ENCODE measurements at regions of chrX and their contacts with region 1.

Region 1: DNA sequence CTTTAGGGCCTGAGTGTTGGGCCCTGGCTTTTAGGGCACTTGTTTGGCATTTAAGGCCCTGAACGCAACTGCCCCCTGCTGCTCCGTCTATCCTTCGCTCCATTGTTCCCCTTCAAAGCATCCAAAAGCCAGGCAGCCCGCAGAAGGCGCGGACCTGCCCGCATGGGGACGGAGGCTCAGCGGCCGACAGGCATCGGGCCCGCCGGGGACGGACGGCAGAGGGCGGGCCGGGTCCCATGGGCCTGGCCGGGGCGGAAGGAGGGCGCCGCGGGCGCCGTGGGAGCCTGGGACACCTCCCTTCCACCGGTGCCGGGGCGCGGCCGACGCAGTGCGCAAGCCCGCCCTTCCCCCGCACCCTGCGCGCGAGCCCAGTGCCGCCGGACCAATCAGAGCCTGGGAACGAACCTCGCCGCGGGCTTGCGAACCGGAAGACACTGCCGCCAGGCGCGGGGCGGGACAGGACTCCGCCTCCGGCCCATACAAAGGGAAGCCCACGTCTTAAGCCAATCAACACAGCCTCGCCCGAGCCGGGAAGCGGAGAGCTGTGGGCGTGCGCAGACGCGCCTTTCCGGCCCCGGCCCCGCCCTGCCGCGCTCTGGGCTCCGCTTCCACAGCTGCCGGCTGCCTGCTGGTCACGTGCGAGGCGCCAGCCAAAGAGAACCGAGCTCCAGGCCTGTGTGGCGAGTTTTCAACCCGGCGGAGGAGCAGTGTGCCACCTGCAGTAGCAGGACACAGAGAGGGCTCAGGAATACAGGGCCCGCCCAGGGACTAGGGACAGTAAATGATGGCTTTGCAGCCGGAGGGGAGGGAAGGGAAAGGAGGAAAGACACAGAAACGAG is 2.1 kb upstream of the ARHGAP4 start:
- DNase-seq: peak; percentile 91
- ATAC-seq: peak; percentile 77
- H3K4me3 Mint-ChIP-seq: peak overlapping the region; percentile 97
- H3K27ac Mint-ChIP-seq: peak overlapping the region; percentile 98
- H3K4me1 Mint-ChIP-seq: peaks cover 15% of the 10 kb centered on the region
- H3K27me3 Mint-ChIP-seq: no peaks in the 10 kb centered on the region

Region 2: DNA sequence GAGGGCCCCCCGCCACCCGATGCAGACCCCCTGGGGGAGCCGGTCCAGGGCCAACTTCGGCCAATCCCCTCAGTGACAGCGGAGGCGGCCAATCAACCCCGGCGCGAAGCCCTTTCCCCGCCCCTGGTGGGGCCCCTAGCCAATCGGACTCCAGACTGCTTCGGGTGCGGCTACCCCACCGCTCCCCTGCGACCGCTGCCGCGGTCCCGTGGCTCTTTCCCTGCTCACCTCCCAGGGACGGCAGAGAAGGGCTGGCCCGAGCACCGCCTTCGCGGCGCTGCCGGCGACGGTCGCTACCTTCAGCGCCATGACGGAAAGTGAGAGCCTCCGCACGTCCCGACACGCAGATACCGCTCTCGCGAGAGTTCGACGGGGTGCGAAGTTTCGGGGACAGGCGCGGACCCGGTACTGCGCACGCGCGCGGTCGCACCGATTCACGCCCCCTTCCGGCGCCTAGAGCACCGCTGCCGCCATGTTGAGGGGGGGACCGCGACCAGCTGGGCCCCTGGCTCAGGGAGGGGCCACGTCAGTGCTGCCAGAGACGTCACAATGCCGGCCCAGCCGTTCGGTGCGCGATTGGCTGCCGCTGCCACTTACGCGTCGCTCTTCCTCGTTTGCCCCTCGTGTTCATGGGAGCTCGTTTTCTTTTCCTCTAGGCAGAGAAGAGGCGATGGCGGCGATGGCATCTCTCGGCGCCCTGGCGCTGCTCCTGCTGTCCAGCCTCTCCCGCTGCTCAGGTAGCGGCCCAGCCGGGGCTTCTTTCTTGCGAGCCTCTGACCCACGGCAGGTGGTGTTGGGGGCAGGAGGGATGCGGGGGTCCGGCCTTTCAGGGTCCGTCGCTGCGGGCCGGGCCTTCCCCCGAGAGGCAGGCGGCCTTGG is 133.9 kb before region 1 on chrX and contains the starts of genes IDH3G and SSR4:
- POLR2A ChIA-PET with region 1: interaction called, 12 read pairs
- DNase-seq: peak; percentile 94
- ATAC-seq: peak; percentile 93
- H3K4me3 Mint-ChIP-seq: peak within 1 kb of the TSS; percentile 95
- H3K27ac Mint-ChIP-seq: peak within 1 kb of the TSS; percentile 94
- H3K4me1 Mint-ChIP-seq: peaks cover 12% of the 10 kb centered on the region
- H3K27me3 Mint-ChIP-seq: no peaks in the 10 kb centered on the region
- total RNA-seq, gene IDH3G: 66.3 to 67.1 TPM
- total RNA-seq, gene SSR4: 158 to 162 TPM

Region 3: DNA sequence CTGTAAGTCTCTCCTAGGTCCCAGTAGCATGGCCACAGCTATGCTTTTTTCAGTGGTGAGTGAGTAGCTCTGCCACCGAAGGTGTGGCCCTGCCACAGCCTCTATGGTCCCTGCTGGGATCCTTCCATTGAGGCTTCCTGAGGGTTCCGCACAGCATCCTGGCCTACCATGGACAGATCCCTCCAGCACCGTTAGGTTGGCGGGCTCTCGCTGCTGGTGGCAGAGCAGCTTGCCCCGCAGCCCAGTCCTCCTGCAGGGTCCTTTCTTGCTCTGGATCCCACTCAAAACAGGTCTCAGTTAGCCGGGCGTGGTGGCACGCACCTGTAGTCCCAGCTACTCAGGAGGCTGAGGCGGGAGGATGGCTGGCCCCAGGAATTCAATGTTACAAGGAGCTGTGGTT is 95.4 kb before region 1 on chrX:
- POLR2A ChIA-PET with region 1: no interaction called
- DNase-seq: no peak
- ATAC-seq: no peak
- H3K4me3 Mint-ChIP-seq: no peak overlapping the region
- H3K27ac Mint-ChIP-seq: no peak overlapping the region
- H3K4me1 Mint-ChIP-seq: peaks cover under 1% of the 10 kb centered on the region
- H3K27me3 Mint-ChIP-seq: peaks cover 31% of the 10 kb centered on the region

Region 4: DNA sequence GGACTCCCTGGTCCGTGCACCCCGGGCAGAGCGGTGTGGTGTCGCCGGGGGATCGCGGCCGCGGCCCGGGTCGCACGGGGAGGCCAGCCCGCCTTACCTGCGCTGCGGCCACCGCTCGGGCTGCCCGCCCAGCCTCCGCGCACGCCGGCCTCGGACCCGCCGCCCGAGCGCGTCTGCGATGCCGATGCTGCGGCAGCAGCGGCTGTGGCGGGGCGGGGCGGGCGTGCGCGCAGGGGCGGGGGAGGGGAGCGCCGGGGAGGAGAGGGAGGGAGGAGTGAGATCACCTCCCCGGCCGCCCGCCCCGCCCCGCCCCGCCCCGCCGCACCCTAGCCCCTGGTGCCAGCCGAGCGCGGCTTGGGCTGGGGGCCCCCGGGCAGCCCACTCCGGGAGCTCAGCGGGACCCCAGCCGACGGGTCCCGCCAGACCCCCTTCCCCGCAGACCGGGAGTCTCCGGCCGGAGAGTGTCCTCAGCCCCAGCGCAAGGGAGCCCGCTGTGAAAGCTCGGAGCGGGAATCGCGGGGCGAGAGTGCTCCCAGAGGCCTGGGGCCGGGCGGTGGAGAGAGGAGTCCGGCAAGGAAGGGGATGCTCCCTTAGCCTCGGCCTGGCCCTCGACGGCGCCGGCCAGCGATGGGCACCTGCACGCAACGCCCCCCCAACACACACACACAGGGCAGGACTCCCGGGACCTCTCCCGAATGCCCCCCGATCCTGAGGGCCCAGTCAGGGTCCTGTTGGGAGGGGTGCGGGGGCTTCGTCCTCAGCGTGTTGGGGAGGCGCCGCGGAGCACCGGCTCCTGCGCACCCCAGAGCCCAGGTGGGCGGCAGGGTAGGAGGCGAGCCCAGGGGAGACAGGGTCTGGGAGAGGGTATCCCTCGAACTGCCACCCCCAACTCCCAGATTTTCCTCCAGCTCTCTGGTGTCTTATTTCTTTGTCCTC is 41.9 kb before region 1 on chrX and contains the start of gene L1CAM:
- POLR2A ChIA-PET with region 1: no interaction called
- DNase-seq: no peak
- ATAC-seq: peak; percentile 48
- H3K4me3 Mint-ChIP-seq: peak within 1 kb of the TSS; percentile 64
- H3K27ac Mint-ChIP-seq: no peak within 1 kb of the TSS
- H3K4me1 Mint-ChIP-seq: no peaks in the 10 kb centered on the region
- H3K27me3 Mint-ChIP-seq: peaks cover 29% of the 10 kb centered on the region
- total RNA-seq, gene L1CAM: 4.5 to 7.2 TPM

Region 5: DNA sequence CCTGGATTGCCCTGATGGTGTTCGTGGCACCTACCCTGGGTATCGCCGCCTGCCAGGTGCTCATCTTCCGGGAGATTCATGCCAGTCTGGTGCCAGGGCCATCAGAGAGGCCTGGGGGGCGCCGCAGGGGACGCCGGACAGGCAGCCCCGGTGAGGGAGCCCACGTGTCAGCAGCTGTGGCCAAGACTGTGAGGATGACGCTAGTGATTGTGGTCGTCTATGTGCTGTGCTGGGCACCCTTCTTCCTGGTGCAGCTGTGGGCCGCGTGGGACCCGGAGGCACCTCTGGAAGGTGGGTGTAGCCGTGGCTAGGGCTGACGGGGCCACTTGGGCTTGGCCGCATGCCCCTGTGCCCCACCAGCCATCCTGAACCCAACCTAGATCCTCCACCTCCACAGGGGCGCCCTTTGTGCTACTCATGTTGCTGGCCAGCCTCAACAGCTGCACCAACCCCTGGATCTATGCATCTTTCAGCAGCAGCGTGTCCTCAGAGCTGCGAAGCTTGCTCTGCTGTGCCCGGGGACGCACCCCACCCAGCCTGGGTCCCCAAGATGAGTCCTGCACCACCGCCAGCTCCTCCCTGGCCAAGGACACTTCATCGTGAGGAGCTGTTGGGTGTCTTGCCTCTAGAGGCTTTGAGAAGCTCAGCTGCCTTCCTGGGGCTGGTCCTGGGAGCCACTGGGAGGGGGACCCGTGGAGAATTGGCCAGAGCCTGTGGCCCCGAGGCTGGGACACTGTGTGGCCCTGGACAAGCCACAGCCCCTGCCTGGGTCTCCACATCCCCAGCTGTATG is 21.8 kb before region 1 on chrX:
- POLR2A ChIA-PET with region 1: interaction called, 16 read pairs
- DNase-seq: no peak
- ATAC-seq: peak; percentile 35
- H3K4me3 Mint-ChIP-seq: no peak overlapping the region
- H3K27ac Mint-ChIP-seq: peak overlapping the region; percentile 51
- H3K4me1 Mint-ChIP-seq: peaks cover 25% of the 10 kb centered on the region
- H3K27me3 Mint-ChIP-seq: no peaks in the 10 kb centered on the region

Region 6: GRCh38 chrX:153947009-153947769 is 19.0 kb after region 1 on chrX:
- POLR2A ChIA-PET with region 1: interaction called, 185 read pairs
- DNase-seq: peak; percentile 81
- ATAC-seq: peak; percentile 79
- H3K4me3 Mint-ChIP-seq: peak overlapping the region; percentile 52
- H3K27ac Mint-ChIP-seq: peak overlapping the region; percentile 87
- H3K4me1 Mint-ChIP-seq: peaks cover 15% of the 10 kb centered on the region
- H3K27me3 Mint-ChIP-seq: no peaks in the 10 kb centered on the region